Ascending aorta (tissue), 2 donors: ENCODE measurements at regions of chr14 and their contacts with region 1.

Region 1: GRCh38 chr14:33986804-33987203 is 35.9 kb upstream of the EGLN3 start:
- DNase-seq: no peak
- H3K4me3 ChIP-seq: no peak overlapping the region
- H3K27ac ChIP-seq: peak overlapping the region; percentile 42 to 45
- H3K4me1 ChIP-seq: no peaks in the 10 kb centered on the region
- H3K27me3 ChIP-seq: no peaks in the 10 kb centered on the region
- CTCF ChIP-seq: no peak

Region 2: GRCh38 chr14:33950320-33951182 is 36.3 kb before region 1 on chr14 and contains the start of gene EGLN3:
- intact Hi-C with region 1: loop called (anchors 2 kb)
- DNase-seq: peak; percentile 40 to 94
- H3K4me3 ChIP-seq: peak within 1 kb of the TSS; percentile 64 to 88
- H3K27ac ChIP-seq: peak within 1 kb of the TSS; percentile 78 to 79
- H3K4me1 ChIP-seq: peaks cover 0 to 8% of the 10 kb centered on the region in 2 donors
- H3K27me3 ChIP-seq: no peaks in the 10 kb centered on the region
- CTCF ChIP-seq: no peak
- total RNA-seq, gene EGLN3: 5.9 TPM

Region 3: DNA sequence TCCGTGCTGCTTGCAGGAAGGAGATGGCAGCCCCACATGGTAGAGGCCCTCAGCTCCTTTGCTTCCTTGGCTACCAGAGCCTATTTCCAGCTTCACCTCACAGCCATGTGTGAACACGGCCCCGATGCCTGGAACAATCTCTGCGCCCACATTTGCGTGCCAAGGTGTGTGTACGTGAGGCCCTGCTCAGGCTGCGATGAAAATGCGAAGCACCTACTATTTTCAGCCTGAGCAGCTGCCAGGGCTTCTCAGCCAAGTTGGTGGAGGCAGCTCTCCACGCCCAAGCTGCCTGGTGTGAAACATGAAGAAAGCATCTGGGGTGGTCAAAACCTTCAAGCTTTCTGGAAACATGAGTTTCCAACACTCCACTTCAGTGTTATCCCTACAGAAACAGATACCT is 141.9 kb after region 1 on chr14:
- intact Hi-C with region 1: no loop called
- DNase-seq: no peak
- H3K4me3 ChIP-seq: no peak overlapping the region
- H3K27ac ChIP-seq: peak overlapping the region in 1 of 2 donors; percentile 22
- H3K4me1 ChIP-seq: peaks cover 2% of the 10 kb centered on the region in 2 donors
- H3K27me3 ChIP-seq: no peaks in the 10 kb centered on the region
- CTCF ChIP-seq: no peak